ENCODE measurements at regions of chr12 and their contacts with region 1.

Region 1: GRCh38 chr12:103548622-103549601 is 38.2 kb upstream of the STAB2 start:
- DNase-seq: peak; percentile 36
- H3K4me3 ChIP-seq: no peak overlapping the region
- H3K27ac ChIP-seq: no peak overlapping the region
- H3K27me3 ChIP-seq: peaks cover 5% of the 10 kb centered on the region
- CTCF ChIP-seq: peak; percentile 92

Region 2: GRCh38 chr12:102883204-102883799 is 665.6 kb before region 1 on chr12:
- CTCF ChIA-PET with region 1: interaction called, 24 read pairs
- POLR2A ChIA-PET with region 1: no interaction called
- DNase-seq: no peak
- H3K4me3 ChIP-seq: no peak overlapping the region
- H3K27ac ChIP-seq: no peak overlapping the region
- H3K27me3 ChIP-seq: no peaks in the 10 kb centered on the region
- CTCF ChIP-seq: peak; percentile 36

Region 3: DNA sequence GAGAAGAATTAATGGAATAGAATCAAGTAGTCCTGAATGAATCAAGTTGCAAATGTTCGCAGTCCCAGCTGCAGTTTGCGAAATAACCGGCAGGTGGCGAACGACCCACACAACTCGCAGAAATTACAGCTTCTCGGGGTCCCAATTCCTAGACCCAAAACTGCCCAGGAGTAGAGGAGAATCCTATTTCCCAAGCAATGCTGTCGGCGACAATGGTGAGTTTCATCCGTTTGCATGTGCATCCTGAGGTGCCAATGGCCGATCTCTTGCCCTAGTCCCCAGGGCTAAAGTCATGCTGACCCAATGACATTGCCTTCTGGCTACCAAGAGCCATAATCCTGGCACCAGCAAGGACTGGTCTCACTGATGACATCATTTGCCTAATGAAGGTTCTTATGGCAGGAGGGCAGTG is 600.0 kb before region 1 on chr12:
- CTCF ChIA-PET with region 1: interaction called, 159 read pairs
- POLR2A ChIA-PET with region 1: no interaction called
- DNase-seq: peak; percentile 3
- H3K4me3 ChIP-seq: no peak overlapping the region
- H3K27ac ChIP-seq: no peak overlapping the region
- H3K27me3 ChIP-seq: peaks cover 9% of the 10 kb centered on the region
- CTCF ChIP-seq: peak; percentile 81

Region 4: GRCh38 chr12:103495479-103496456 is 53.1 kb before region 1 on chr12 and contains the start of gene C12orf42:
- CTCF ChIA-PET with region 1: interaction called, 40 read pairs
- POLR2A ChIA-PET with region 1: no interaction called
- DNase-seq: no peak
- H3K4me3 ChIP-seq: no peak within 1 kb of the TSS
- H3K27ac ChIP-seq: no peak within 1 kb of the TSS
- H3K27me3 ChIP-seq: peaks cover 12% of the 10 kb centered on the region
- CTCF ChIP-seq: peak; percentile 46
- polyA plus RNA-seq, gene C12orf42: not detected in 2 replicates

Region 5: GRCh38 chr12:103523771-103524170 is 25.1 kb before region 1 on chr12:
- CTCF ChIA-PET with region 1: interaction called, 15 read pairs
- POLR2A ChIA-PET with region 1: no interaction called
- DNase-seq: no peak
- H3K4me3 ChIP-seq: no peak overlapping the region
- H3K27ac ChIP-seq: no peak overlapping the region
- H3K27me3 ChIP-seq: peaks cover 2% of the 10 kb centered on the region
- CTCF ChIP-seq: no peak

Region 6: GRCh38 chr12:103538397-103538796 is 10.5 kb before region 1 on chr12:
- CTCF ChIA-PET with region 1: interaction called, 15 read pairs
- POLR2A ChIA-PET with region 1: no interaction called
- DNase-seq: no peak
- H3K4me3 ChIP-seq: no peak overlapping the region
- H3K27ac ChIP-seq: no peak overlapping the region
- H3K27me3 ChIP-seq: no peaks in the 10 kb centered on the region
- CTCF ChIP-seq: no peak

Region 7: GRCh38 chr12:103560604-103561573 is 12.0 kb after region 1 on chr12:
- CTCF ChIA-PET with region 1: interaction called, 24 read pairs
- POLR2A ChIA-PET with region 1: no interaction called
- DNase-seq: peak; percentile 77
- H3K4me3 ChIP-seq: no peak overlapping the region
- H3K27ac ChIP-seq: peak overlapping the region; percentile 23
- H3K27me3 ChIP-seq: peaks cover 4% of the 10 kb centered on the region
- CTCF ChIP-seq: no peak

Measured in AG04450 (cell line).